GM10248 (cell line): ENCODE measurements at regions of chr15 and their contacts with region 1.

Region 1: GRCh38 chr15:90327311-90327710 is 24.8 kb upstream of the ZNF774 start:
- DNase-seq: no peak
- CTCF ChIP-seq: no peak

Region 2: GRCh38 chr15:90291679-90292356 is 35.5 kb before region 1 on chr15:
- CTCF ChIA-PET with region 1: interaction called, 14 read pairs
- POLR2A ChIA-PET with region 1: no interaction called
- DNase-seq: peak; percentile 32
- CTCF ChIP-seq: no peak